Right cardiac atrium (tissue), 5 donors: ENCODE measurements at regions of chr3 and their contacts with region 1.

Region 1: GRCh38 chr3:150359381-150359780 is 48.7 kb upstream of the TSC22D2 start:
- DNase-seq: no peak
- ATAC-seq: no peak
- H3K4me3 ChIP-seq: no peak overlapping the region
- H3K27ac ChIP-seq: no peak overlapping the region
- H3K4me1 ChIP-seq: no peaks in the 10 kb centered on the region
- H3K27me3 ChIP-seq: no peaks in the 10 kb centered on the region

Region 2: DNA sequence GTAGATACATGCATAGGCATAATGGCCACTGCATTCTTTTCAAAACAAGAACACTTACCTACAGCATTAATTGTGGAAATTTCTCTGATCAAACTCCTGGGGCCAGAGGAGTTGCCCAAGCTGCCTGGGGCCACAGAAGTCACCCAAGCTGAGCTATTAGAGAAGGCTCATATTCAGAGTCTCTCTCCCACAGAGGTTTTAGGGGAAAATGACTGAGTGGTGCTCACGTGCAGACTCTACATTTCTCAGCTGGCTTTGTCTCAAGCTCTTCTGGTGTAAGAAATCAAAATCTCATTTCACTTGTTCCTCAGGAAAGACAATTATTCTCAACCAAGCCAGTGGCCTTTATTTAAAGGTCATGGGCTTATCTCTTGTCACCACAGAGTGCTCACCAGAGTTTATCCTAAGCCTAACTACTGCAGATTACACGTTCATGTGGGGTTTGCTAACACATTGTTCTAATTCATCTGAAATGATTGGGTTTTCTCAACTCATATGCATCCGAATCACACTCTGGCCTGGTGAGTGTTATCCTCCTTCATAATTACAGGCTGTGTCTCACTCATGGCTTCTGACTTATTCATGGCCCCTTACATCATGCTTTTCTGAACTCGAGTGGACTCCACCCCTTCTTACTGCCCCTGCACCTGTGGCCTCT is 34.7 kb before region 1 on chr3:
- intact Hi-C with region 1: loop called in 1 of 4 experiments (anchors 2 kb)
- DNase-seq: no peak
- ATAC-seq: no peak
- H3K4me3 ChIP-seq: no peak overlapping the region
- H3K27ac ChIP-seq: no peak overlapping the region
- H3K4me1 ChIP-seq: no peaks in the 10 kb centered on the region
- H3K27me3 ChIP-seq: no peaks in the 10 kb centered on the region